GM13977 (cell line): ENCODE measurements at regions of chr10 and their contacts with region 1.

Region 1: GRCh38 chr10:70363971-70364771 is 18.3 kb downstream of the LRRC20 start:
- DNase-seq: peak; percentile 84
- CTCF ChIP-seq: peak; percentile 93

Region 2: GRCh38 chr10:70272925-70273316 is 91.2 kb before region 1 on chr10:
- in situ Hi-C with region 1: loop called (anchors 5 kb)
- DNase-seq: peak; percentile 77
- CTCF ChIP-seq: peak; percentile 52

Region 3: DNA sequence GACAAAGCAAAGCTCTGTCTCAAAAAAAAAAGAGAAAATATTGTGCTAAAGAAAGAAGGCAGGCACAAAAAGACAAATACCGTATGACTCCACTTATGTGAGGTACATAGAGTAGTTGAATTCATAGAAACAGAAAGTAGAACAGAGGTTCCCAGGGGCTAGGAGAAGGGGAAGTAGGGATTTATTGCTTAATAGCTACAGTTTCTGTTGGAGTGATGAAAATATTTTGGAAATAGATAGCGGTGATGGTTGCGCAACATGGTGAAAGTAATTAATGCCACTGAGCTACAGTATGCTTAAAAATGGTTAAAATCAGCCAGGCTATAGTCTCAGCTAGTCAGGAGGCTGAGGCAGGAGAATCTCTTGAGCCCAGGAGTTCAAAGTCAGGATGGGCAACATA is 61.9 kb before region 1 on chr10:
- in situ Hi-C with region 1: no loop called
- DNase-seq: no peak
- CTCF ChIP-seq: no peak

Region 4: DNA sequence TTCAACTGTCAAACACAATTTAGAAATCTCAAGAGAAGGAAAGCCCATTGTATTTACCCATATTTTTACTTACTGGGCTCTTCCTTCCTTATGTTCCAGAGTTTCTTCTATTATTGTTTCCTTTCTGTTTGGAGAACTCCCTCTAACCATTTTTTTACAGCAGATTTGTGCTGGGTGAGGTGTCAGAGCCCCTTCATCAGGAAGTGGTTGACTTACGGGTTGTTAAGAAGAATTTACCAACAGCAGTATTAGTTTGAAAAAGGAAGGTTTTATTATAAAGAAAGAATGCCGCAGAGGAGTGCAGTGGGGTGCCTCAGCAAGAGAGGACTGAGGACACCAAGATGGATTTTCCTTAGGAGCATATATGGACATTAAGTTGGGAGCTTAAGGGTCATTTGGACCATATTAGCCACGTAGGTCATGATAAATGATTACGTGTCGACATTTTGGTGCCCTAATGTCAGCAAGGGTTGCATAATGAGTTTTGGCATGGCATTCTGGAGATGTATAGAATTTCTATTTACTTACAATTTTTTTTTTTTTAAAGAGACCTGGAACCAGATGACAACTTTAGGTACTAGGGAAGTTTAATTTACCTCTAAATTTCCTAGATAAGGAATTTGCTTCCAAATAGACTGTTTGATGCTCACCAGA is 427.3 kb after region 1 on chr10:
- in situ Hi-C with region 1: no loop called
- DNase-seq: no peak
- CTCF ChIP-seq: no peak

Region 5: DNA sequence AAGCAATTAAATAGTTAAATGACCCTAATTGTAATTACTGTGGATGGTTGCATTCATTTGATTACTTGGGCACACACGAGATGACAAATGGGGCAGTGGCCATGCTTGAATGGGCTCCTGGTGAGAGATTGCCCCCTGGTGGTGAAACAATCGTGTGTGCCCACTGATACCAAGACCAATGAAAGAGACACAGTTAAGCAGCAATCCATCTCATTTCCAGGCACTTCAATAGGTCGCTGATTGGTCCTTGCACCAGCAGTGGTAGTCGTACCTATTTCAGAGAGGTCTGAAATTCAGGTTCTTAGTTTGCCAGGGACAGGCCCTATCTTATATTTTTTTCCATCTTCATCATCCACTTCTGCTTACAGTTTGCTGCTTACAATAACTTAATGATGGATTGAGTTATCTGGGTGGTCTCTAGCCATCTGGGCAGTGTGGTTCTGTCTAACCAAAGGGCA is 515.9 kb after region 1 on chr10:
- in situ Hi-C with region 1: no loop called
- DNase-seq: peak; percentile 77
- CTCF ChIP-seq: peak; percentile 80